Transverse colon (tissue), 4 donors: ENCODE measurements at regions of chr17 and their contacts with region 1.

Region 1: DNA sequence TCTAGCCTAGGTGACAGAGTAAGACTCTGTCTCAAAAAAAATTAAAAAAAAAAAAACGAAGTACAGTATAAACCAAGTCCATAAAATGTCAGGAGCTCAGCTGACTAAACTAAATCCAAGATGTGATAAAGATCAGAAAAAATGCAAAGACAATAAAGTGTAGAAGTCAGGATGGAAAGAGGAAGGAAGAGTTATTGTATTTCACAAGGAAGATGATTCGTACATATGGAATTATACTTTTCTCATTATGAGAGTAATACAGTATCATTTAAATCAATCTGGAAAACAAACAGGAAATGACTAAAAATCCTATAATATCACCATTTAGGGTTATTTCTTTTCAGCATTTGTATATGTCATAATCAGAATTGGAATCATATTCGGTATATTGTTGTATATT is 11.4 kb upstream of the APOH start:
- DNase-seq: no peak
- H3K4me3 ChIP-seq: no peak overlapping the region
- H3K27ac ChIP-seq: no peak overlapping the region
- H3K4me1 ChIP-seq: no peaks in the 10 kb centered on the region
- H3K27me3 ChIP-seq: no peaks in the 10 kb centered on the region
- CTCF ChIP-seq: no peak
- EP300 ChIP-seq: no peak
- POLR2A ChIP-seq: no peak

Region 2: DNA sequence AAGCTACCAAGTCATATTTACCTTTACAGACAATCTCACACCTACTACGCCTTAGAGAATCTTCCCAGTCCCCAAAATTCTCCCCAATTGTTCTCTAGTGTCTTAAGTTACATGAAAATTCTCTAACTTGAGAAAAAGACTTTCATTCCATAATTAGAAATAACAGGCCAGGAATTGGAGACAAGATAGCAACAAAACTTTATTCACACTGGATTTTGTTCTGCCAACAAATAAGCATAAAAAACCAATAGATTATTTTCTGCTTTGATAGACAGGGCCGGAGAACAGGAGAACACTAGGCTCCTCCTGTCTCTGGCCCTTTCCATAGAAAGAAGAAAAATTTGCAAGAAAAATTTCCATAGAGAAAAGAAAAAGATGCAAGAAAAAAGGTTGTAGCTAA is 58.1 kb before region 1 on chr17:
- in situ Hi-C with region 1: no loop called
- intact Hi-C with region 1: loop called (anchors 2 kb)
- DNase-seq: no peak
- H3K4me3 ChIP-seq: no peak overlapping the region
- H3K27ac ChIP-seq: no peak overlapping the region
- H3K4me1 ChIP-seq: no peaks in the 10 kb centered on the region
- H3K27me3 ChIP-seq: no peaks in the 10 kb centered on the region
- CTCF ChIP-seq: no peak
- EP300 ChIP-seq: no peak
- POLR2A ChIP-seq: no peak